PC-3 (cell line): ENCODE measurements at regions of chr5 and their contacts with region 1.

Region 1: DNA sequence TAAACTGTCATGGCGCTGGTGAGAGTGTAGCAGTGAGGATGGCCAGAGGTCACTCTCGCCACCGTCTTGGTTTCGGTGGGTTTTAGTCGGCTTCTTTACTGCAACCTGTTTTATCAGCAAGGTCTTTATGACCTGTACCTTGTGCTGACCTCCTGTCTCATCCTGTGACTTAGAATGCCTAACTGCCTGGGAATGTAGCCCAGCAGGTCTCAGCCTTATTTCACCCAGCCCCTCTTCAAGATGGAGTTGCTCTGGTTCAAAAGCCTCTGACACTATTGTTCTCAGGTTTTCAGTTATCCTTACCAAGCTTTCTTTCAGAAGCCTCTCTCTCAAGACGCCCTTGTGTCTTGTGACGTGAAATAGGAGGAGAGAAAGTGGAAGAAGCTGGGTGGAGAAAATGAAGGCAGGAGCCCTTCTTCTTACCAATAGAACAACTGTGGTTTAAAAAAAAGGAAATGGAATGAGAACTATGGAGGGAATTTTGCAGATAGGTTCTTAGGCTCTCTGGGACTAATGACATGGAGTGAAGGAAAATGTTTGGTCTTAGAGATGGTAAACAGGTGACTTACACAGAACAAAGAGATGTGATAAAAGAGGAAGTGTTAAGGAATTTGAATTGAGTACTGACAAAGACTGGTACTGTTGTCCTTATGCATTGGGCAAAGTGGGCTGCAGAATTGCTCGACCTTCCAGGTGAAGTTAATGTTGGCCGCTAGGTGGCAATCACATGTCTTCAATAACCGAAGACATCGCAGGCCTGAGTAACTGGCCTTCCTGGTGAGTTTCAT is 133.3 kb upstream of the RAI14 start:
- DNase-seq: peak; percentile 93
- ATAC-seq: peak; percentile 70
- H3K4me3 ChIP-seq: no peak overlapping the region
- H3K27ac ChIP-seq: peak overlapping the region; percentile 74
- H3K4me1 ChIP-seq: peaks cover 52% of the 10 kb centered on the region
- H3K27me3 ChIP-seq: no peaks in the 10 kb centered on the region
- CTCF ChIP-seq: peak; percentile 88

Region 2: DNA sequence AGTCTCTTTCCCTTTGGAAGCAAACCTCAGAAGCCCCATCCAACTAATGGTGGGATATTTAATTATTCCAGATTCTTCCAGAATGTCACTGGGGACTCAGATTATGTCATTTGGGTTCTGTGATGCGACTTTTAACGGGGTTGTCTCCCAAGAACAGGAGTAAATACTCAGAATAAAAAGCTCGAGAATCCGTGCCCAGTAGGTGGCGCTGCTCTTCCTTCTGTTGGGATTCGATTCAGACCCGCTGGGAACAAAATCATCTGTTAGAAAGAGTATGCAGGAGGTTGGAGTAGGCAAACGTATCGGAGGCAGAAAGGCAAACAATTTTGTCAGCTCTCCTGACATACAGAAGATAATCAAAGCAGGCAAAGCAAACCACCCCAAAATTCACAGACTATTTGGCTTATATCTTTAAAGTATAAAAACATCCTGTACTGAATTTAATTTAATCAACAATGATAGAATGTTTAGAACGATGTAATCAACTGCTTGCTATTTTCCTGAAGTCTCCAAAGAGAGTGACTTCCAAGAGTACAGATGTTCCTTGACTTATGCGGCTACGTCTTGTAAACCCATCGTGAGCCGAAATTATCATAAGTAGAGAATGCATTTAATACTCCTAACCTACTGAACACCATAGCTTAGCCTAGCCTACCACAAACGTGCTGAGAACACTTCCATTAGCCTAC is 36.5 kb before region 1 on chr5:
- CTCF ChIA-PET with region 1: interaction called, 10 read pairs
- POLR2A ChIA-PET with region 1: interaction called, 8 read pairs
- intact Hi-C with region 1: loop called (anchors 1 kb)
- DNase-seq: peak; percentile 94
- ATAC-seq: peak; percentile 37
- H3K4me3 ChIP-seq: peak overlapping the region; percentile 6; the same call in 1 of the 2 replicates
- H3K27ac ChIP-seq: peak overlapping the region; percentile 90
- H3K4me1 ChIP-seq: peaks cover 52% of the 10 kb centered on the region
- H3K27me3 ChIP-seq: no peaks in the 10 kb centered on the region
- CTCF ChIP-seq: peak; percentile 96

Region 3: DNA sequence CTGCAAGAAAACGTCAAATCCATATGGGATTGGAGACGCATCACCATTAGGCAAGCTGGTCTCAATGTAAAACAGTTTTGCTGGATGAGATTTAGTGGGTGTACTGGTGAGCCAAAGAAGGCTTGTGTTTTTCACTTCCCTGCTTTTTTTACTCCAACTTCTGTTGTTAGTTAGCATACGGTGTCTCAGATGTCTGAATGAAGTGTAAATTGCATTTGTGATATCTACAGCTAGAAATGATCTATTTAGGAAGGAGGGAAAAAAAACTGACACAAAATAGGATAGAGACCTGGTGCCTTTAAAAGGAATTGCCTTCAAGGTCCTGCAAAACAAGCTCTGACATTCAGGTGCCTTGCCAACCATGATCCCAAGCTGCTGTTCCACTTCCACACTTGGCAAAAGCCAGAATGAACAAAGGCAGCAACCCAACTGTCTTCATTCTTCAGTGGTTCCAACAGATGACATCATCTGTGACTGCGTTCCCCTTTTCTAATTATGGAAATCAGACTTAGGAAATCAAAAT is 29.2 kb after region 1 on chr5:
- CTCF ChIA-PET with region 1: no interaction called
- POLR2A ChIA-PET with region 1: no interaction called
- intact Hi-C with region 1: no loop called
- DNase-seq: no peak
- ATAC-seq: no peak
- H3K4me3 ChIP-seq: no peak overlapping the region
- H3K27ac ChIP-seq: no peak overlapping the region
- H3K4me1 ChIP-seq: peaks cover 6% of the 10 kb centered on the region; the same call in 1 of the 2 replicates
- H3K27me3 ChIP-seq: no peaks in the 10 kb centered on the region
- CTCF ChIP-seq: no peak

Region 4: GRCh38 chr5:34587355-34588241 is 64.8 kb after region 1 on chr5:
- CTCF ChIA-PET with region 1: interaction called, 3 read pairs
- POLR2A ChIA-PET with region 1: no interaction called
- intact Hi-C with region 1: loop called (anchors 1 kb)
- DNase-seq: peak; percentile 76
- ATAC-seq: peak; percentile 6
- H3K4me3 ChIP-seq: peak overlapping the region; percentile 45
- H3K27ac ChIP-seq: peak overlapping the region; percentile 99
- H3K4me1 ChIP-seq: peaks cover 68% of the 10 kb centered on the region
- H3K27me3 ChIP-seq: no peaks in the 10 kb centered on the region
- CTCF ChIP-seq: no peak

Region 5: GRCh38 chr5:34686762-34687268 is 164.0 kb after region 1 on chr5:
- CTCF ChIA-PET with region 1: no interaction called
- POLR2A ChIA-PET with region 1: no interaction called
- intact Hi-C with region 1: loop called (anchors 10 kb)
- DNase-seq: peak; percentile 93
- ATAC-seq: peak; percentile 85
- H3K4me3 ChIP-seq: no peak overlapping the region
- H3K27ac ChIP-seq: peak overlapping the region; percentile 72
- H3K4me1 ChIP-seq: peaks cover 53% of the 10 kb centered on the region
- H3K27me3 ChIP-seq: no peaks in the 10 kb centered on the region
- CTCF ChIP-seq: 0 out of 2 replicates have a peak, but pooled peaks have one; percentile 11

Region 6: DNA sequence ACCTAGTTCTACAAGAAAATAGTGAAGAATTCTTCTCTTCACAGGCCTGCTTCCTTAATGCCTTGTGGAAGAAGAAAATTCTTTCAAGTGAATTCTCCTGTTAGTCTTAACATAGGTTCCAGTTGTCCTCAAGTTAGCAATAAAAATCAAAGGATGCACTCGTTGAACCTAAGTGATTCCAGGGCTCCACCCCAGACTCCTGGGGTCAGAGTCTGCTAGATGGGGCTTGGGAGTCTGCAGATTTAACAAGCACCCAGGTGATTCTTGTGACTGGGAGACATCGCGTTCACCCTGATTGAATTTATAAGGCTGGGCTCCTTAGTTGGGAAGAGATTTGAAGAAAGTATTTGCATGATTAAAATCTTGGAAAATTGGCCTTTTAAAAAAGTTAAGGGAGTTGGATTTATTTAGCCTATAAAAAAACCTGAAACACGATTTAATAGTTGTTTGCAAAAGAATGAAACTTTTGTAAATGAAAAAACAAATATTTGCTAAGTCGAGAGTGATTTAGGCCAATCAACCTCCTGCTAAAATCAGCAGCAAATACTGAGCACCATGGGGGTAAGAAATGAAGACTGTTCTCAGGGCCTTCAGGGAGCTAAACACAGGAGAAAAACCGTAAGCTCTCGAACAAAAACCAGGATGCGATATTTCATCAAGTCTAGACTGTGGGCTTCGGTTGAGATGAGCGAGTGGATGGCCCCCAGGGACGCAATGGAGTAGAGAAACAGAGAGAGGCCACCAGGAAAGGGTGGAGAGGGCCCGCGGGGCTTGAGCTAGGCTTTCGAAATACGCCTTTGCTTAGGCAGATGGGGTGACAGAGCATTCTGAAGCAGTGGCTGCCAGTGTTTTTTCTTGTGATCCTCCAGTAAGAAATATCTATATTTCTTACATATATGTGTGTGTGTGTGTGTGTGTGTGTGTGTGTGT is 229.3 kb after region 1 on chr5:
- CTCF ChIA-PET with region 1: no interaction called
- POLR2A ChIA-PET with region 1: no interaction called
- intact Hi-C with region 1: loop called (anchors 5 kb)
- DNase-seq: peak; percentile 19
- ATAC-seq: peak; percentile 71
- H3K4me3 ChIP-seq: no peak overlapping the region
- H3K27ac ChIP-seq: peak overlapping the region; percentile 88
- H3K4me1 ChIP-seq: peaks cover 13% of the 10 kb centered on the region
- H3K27me3 ChIP-seq: no peaks in the 10 kb centered on the region
- CTCF ChIP-seq: no peak

Region 7: GRCh38 chr5:34898258-34898895 is 375.6 kb after region 1 on chr5:
- CTCF ChIA-PET with region 1: interaction called, 3 read pairs
- POLR2A ChIA-PET with region 1: no interaction called
- intact Hi-C with region 1: loop called (anchors 1 kb)
- DNase-seq: peak; percentile 80
- ATAC-seq: peak; percentile 96
- H3K4me3 ChIP-seq: no peak overlapping the region
- H3K27ac ChIP-seq: no peak overlapping the region
- H3K4me1 ChIP-seq: peaks cover 14% of the 10 kb centered on the region
- H3K27me3 ChIP-seq: no peaks in the 10 kb centered on the region
- CTCF ChIP-seq: peak; percentile 93

Region 8: DNA sequence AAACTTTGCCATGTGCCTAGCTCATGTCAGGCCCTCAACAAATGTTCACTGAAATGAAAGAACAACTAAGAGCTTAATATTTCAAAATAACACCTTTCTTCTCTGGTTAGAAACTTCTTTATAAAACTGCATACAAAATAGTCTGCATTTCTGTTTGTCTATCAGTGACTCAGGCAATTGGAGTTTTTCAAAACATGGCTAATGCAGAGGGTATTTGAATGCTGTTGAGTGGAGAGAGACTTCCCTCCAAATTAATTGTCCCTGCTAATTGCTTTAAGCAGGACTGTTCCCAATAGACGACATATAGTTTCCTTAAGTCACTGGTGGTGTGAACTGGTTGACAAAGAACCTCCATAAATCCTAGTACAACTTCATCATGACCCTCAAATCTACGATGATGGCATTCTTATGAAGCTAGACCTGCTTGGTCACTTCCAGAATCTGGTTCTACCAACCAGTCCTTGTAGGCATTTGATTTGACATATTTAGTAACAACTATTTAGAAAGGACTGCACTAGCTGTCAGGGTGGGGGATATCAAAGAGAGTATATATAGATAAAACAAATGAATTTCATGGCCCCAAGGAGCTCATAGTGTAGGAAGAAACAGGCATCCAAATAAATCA is 623.0 kb after region 1 on chr5:
- CTCF ChIA-PET with region 1: no interaction called
- POLR2A ChIA-PET with region 1: no interaction called
- intact Hi-C with region 1: no loop called
- DNase-seq: peak; percentile 53
- ATAC-seq: 0 out of 2 replicates have a peak, but pooled peaks have one; percentile 20
- H3K4me3 ChIP-seq: no peak overlapping the region
- H3K27ac ChIP-seq: no peak overlapping the region
- H3K4me1 ChIP-seq: peaks cover 16% of the 10 kb centered on the region
- H3K27me3 ChIP-seq: peaks cover 7% of the 10 kb centered on the region; the same call in 1 of the 2 replicates
- CTCF ChIP-seq: no peak